Natural killer cell (primary cell): ENCODE measurements at regions of chr4 and their contacts with region 1.

Region 1: GRCh38 chr4:4524364-4524763 is 17.5 kb downstream of the STX18 start:
- DNase-seq: peak; percentile 35 to 70
- ATAC-seq: peak; percentile 98 to 100 (median 100)
- H3K4me3 ChIP-seq: no peak overlapping the region
- H3K4me3 Mint-ChIP-seq: peak overlapping the region; percentile 81
- H3K27ac ChIP-seq: peak overlapping the region; percentile 70
- H3K27ac Mint-ChIP-seq: peak overlapping the region; percentile 87 to 94
- H3K4me1 ChIP-seq: peaks cover 10% of the 10 kb centered on the region
- H3K4me1 Mint-ChIP-seq: peaks cover 25 to 35% of the 10 kb centered on the region in 2 donors
- H3K27me3 ChIP-seq: no peaks in the 10 kb centered on the region
- H3K27me3 Mint-ChIP-seq: no peaks in the 10 kb centered on the region
- CTCF ChIP-seq: peak; percentile 33

Region 2: GRCh38 chr4:4461850-4462249 is 62.5 kb before region 1 on chr4:
- intact Hi-C with region 1: no loop called
- DNase-seq: peak in 1 of 2 donors; percentile 76
- ATAC-seq: peak; percentile 52 to 85 (median 68)
- H3K4me3 ChIP-seq: no peak overlapping the region
- H3K4me3 Mint-ChIP-seq: peak overlapping the region; percentile 59
- H3K27ac ChIP-seq: peak overlapping the region; percentile 26
- H3K27ac Mint-ChIP-seq: peak overlapping the region; percentile 86 to 92
- H3K4me1 ChIP-seq: peaks cover 18% of the 10 kb centered on the region
- H3K4me1 Mint-ChIP-seq: peaks cover 26 to 34% of the 10 kb centered on the region in 2 donors
- H3K27me3 ChIP-seq: no peaks in the 10 kb centered on the region
- H3K27me3 Mint-ChIP-seq: no peaks in the 10 kb centered on the region
- CTCF ChIP-seq: no peak

Region 3: GRCh38 chr4:4541661-4542570 is 17.6 kb after region 1 on chr4 and contains the start of gene STX18:
- intact Hi-C with region 1: loop called (anchors 2 kb)
- DNase-seq: peak; percentile 87 to 93
- ATAC-seq: peak; percentile 93 to 96 (median 96)
- H3K4me3 ChIP-seq: peak within 1 kb of the TSS; percentile 89
- H3K4me3 Mint-ChIP-seq: peak within 1 kb of the TSS; percentile 98
- H3K27ac ChIP-seq: peak within 1 kb of the TSS; percentile 90
- H3K27ac Mint-ChIP-seq: peak within 1 kb of the TSS; percentile 92 to 96
- H3K4me1 ChIP-seq: peaks cover 17% of the 10 kb centered on the region
- H3K4me1 Mint-ChIP-seq: peaks cover 37 to 57% of the 10 kb centered on the region in 2 donors
- H3K27me3 ChIP-seq: no peaks in the 10 kb centered on the region
- H3K27me3 Mint-ChIP-seq: no peaks in the 10 kb centered on the region
- CTCF ChIP-seq: no peak
- total RNA-seq, gene STX18: 23.1 to 32.8 (median 29.0) TPM

Region 4: GRCh38 chr4:4575273-4576211 is 51.2 kb after region 1 on chr4:
- intact Hi-C with region 1: loop called (anchors 5 kb)
- DNase-seq: peak; percentile 62 to 80
- ATAC-seq: peak; percentile 87 to 91 (median 90)
- H3K4me3 ChIP-seq: peak overlapping the region; percentile 53
- H3K4me3 Mint-ChIP-seq: peak overlapping the region; percentile 87
- H3K27ac ChIP-seq: peak overlapping the region; percentile 41
- H3K27ac Mint-ChIP-seq: peak overlapping the region; percentile 14 to 82
- H3K4me1 ChIP-seq: peaks cover 11% of the 10 kb centered on the region
- H3K4me1 Mint-ChIP-seq: peaks cover 15 to 18% of the 10 kb centered on the region in 2 donors
- H3K27me3 ChIP-seq: no peaks in the 10 kb centered on the region
- H3K27me3 Mint-ChIP-seq: no peaks in the 10 kb centered on the region
- CTCF ChIP-seq: peak; percentile 34

Region 5: DNA sequence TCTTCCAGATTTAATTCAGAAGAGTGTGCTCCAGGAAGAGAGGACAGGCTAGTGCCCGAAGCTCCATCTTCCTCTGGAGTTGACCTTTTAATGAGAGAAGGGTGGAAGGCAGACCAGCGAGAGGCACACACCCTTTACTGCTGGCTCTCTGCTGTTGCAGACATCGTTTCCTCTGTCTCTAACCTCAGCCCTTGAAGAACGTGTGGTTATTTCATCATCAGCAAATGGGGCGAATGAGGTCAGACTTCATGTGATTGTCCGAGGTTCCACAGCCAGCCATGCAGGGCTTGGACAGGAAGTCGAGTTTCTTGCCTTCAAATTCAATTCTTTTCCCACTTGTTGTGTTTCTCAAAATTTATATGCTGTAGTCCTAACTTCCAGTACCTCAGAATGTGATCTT is 179.9 kb after region 1 on chr4:
- intact Hi-C with region 1: no loop called
- DNase-seq: no peak
- ATAC-seq: no peak
- H3K4me3 ChIP-seq: no peak overlapping the region
- H3K4me3 Mint-ChIP-seq: no peak overlapping the region
- H3K27ac ChIP-seq: no peak overlapping the region
- H3K27ac Mint-ChIP-seq: no peak overlapping the region
- H3K4me1 ChIP-seq: no peaks in the 10 kb centered on the region
- H3K4me1 Mint-ChIP-seq: peaks cover 0 to 6% of the 10 kb centered on the region in 2 donors
- H3K27me3 ChIP-seq: no peaks in the 10 kb centered on the region
- H3K27me3 Mint-ChIP-seq: peaks cover 0 to 4% of the 10 kb centered on the region in 2 donors
- CTCF ChIP-seq: no peak